Calu3 (cell line): ENCODE measurements at regions of chrX and their contacts with region 1.

Region 1: GRCh38 chrX:41180194-41180908 is 95.1 kb downstream of the USP9X start:
- DNase-seq: peak; percentile 39
- H3K4me3 Mint-ChIP-seq: peak overlapping the region; percentile 24
- H3K27ac Mint-ChIP-seq: peak overlapping the region; percentile 76
- H3K4me1 Mint-ChIP-seq: peaks cover 28% of the 10 kb centered on the region
- H3K27me3 Mint-ChIP-seq: no peaks in the 10 kb centered on the region
- CTCF ChIP-seq: peak; percentile 56

Region 2: DNA sequence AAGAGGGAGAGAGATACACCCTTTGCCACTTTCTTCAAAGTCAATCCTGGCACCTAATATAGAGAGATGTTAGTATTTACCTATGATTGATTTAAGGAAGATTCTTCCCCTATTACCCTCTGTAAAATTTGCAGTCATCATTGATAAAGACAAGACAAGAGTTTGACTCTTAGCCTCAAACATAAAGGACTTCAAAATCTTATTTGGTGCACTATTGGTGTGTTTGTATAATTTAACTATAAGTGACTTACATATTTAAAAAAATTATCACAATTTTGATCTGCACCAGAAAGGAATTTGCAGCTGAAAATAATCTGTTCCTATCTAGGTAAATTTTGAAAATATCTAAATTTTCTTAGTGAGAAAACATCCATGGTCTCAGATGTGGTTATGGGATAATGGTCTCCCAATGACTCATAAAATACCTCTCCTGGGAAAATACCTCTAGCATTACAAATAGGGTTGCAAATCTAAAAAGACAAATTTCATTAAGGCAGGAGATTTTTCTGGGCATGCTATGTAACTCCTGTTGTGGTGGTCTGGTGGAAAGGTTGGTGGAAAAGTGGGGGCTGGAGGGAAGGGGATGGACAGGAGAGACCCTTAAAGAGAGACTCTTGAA is 271.4 kb before region 1 on chrX:
- CTCF ChIA-PET with region 1: no interaction called
- intact Hi-C with region 1: no loop called
- DNase-seq: no peak
- H3K4me3 Mint-ChIP-seq: no peak overlapping the region
- H3K27ac Mint-ChIP-seq: peak overlapping the region; percentile 46
- H3K4me1 Mint-ChIP-seq: peaks cover 12% of the 10 kb centered on the region
- H3K27me3 Mint-ChIP-seq: no peaks in the 10 kb centered on the region
- CTCF ChIP-seq: no peak

Region 3: DNA sequence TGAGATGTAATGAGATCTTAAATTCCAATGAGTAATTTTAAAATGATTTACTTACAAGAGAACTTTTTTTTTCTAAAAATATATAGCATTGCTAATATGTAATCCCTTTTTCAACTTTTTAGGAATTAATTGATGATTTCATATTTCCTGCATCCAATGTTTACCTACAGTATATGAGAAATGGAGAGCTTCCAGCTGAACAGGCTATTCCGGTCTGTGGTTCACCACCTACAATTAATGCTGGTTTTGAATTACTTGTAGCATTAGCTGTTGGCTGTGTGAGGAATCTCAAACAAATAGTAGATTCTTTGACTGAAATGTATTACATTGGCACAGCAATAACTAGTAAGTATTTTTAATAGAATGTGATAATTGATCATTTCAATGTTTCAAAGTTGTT is 18.1 kb after region 1 on chrX:
- CTCF ChIA-PET with region 1: no interaction called
- intact Hi-C with region 1: loop called (anchors 1 kb)
- DNase-seq: peak; percentile 45
- H3K4me3 Mint-ChIP-seq: no peak overlapping the region
- H3K27ac Mint-ChIP-seq: no peak overlapping the region
- H3K4me1 Mint-ChIP-seq: no peaks in the 10 kb centered on the region
- H3K27me3 Mint-ChIP-seq: no peaks in the 10 kb centered on the region
- CTCF ChIP-seq: no peak

Region 4: GRCh38 chrX:41258226-41258625 is 77.9 kb after region 1 on chrX:
- CTCF ChIA-PET with region 1: interaction called, 3 read pairs
- intact Hi-C with region 1: loop called (anchors 2 kb)
- DNase-seq: no peak
- H3K4me3 Mint-ChIP-seq: no peak overlapping the region
- H3K27ac Mint-ChIP-seq: no peak overlapping the region
- H3K4me1 Mint-ChIP-seq: peaks cover 4% of the 10 kb centered on the region
- H3K27me3 Mint-ChIP-seq: no peaks in the 10 kb centered on the region
- CTCF ChIP-seq: no peak

Region 5: DNA sequence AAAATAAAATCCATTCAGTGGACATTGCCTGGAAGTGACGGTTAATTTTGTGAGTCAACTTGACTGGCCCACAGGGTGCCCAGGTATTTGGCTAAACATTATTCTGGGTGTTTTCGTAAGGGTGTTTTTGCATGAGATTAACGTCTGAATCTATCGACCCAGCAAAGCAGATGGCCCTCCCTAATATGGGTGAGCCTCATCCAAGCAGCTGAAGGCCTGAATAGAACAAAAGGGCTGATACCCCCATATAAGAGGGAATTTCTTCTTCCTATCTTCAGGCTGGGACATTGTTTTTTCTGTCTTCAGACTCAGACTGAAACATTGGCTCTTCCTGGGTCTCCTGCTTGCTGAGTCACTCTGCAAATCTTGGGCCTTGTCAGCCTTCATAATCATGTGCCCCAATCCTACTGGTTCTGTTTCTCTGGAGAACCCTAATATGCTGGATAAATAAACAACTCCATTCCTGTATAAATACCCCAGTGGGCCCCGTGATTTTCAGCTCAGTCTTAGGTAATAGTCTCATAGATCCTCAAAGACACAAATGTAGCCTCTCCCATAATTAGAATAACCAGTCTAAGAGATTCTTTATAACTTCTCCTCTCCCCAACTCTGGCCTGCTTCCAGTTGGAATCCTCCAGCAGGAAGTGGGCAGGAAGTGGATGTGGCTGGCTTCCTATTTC is 120.5 kb after region 1 on chrX:
- CTCF ChIA-PET with region 1: no interaction called
- intact Hi-C with region 1: no loop called
- DNase-seq: no peak
- H3K4me3 Mint-ChIP-seq: no peak overlapping the region
- H3K27ac Mint-ChIP-seq: peak overlapping the region; percentile 88
- H3K4me1 Mint-ChIP-seq: peaks cover 37% of the 10 kb centered on the region
- H3K27me3 Mint-ChIP-seq: no peaks in the 10 kb centered on the region
- CTCF ChIP-seq: no peak